ENCODE measurements at regions of chr16 and their contacts with region 1.

Region 1: DNA sequence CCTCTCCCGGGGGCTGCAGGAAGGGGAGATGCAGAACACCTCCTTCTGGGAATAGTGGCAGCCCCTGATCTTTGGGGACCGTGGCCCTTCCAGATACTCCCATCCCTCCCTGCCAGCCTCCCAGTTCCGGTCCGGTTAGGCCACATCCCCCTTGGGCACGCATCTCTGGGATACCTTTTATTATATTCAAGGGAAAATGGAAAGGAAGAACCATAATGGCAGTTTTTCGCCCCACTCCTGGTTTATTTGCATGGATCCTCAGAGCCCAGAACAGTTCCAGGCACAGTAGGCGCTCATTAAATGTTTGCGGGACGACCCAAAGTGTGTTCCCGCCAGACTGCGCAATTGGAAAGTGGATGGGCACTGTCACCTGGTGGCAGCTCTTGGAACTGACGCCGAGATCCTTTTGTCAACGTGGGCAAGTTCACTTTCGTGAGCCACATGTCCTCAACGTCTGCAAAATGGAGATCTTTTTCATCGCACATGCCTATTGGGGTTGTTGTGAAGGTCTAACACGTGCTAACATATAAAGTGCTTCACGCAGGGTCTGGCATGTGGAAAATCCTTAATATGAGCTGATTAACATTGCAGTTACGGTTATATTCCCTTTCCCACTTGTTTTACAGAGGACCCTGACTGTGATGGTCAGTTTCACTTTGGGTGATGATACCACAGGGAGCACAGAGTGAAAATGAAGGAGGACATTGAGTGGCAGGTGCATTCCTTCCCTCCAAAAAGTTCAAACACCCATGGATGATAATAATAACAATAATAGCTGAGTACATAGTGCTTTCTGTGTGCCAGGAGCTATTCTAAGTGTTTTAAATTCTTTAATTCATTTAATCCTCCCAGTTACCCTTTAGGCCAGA is 1.7 kb upstream of the GPRC5B start:
- DNase-seq: peak; percentile 91
- H3K4me3 Mint-ChIP-seq: peak overlapping the region; percentile 72
- H3K27ac Mint-ChIP-seq: no peak overlapping the region
- H3K4me1 Mint-ChIP-seq: peaks cover 24% of the 10 kb centered on the region
- H3K27me3 Mint-ChIP-seq: peaks cover 21% of the 10 kb centered on the region

Region 2: GRCh38 chr16:19086322-19087199 is 799.7 kb before region 1 on chr16:
- CTCF ChIA-PET with region 1: no interaction called
- intact Hi-C with region 1: loop called (anchors 5 kb)
- DNase-seq: peak; percentile 78
- H3K4me3 Mint-ChIP-seq: peak overlapping the region; percentile 56
- H3K27ac Mint-ChIP-seq: no peak overlapping the region
- H3K4me1 Mint-ChIP-seq: no peaks in the 10 kb centered on the region
- H3K27me3 Mint-ChIP-seq: peaks cover 8% of the 10 kb centered on the region

Region 3: DNA sequence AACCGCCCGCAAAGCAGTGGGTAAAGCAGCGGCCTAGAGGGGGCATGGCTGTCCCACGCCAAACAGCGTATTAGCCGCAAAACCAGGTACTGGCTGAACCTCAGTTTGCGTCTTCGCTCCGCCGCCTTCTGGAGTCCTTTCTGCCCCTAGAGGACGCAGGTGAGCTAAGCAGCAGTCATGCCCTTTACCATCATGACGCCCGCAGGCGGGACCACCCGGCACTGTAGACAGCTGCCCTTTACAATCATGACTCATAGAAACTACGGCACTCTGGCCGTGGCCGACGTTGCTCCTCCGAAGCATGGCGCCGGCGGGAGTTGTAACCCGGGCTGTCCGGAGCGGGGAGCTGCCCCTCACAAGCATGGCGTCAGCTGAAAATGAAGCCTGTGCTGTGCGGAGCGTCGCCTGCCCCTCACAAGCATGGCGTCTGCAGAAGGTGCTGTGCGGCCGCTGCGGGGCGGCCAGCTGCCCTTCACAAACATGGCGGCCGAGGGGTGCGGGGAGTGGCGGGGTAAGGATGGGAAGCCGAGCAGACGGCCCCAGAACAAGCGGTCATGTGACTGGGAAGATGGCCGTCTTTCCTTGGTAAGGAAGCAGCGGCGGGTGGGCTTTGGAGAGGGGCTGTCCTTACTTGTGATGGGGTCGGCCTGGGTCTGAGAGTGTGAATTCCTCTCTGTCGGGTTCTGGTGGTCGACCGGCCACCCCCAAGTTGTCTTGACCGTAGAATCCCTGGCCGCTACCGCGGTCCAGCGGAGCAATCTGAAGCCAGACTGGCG is 331.0 kb before region 1 on chr16 and contains the start of gene VPS35L:
- CTCF ChIA-PET with region 1: interaction called, 28 read pairs
- intact Hi-C with region 1: loop called (anchors 1 kb)
- DNase-seq: peak; percentile 93
- H3K4me3 Mint-ChIP-seq: peak within 1 kb of the TSS; percentile 91
- H3K27ac Mint-ChIP-seq: peak within 1 kb of the TSS; percentile 89
- H3K4me1 Mint-ChIP-seq: peaks cover 17% of the 10 kb centered on the region
- H3K27me3 Mint-ChIP-seq: no peaks in the 10 kb centered on the region
- total RNA-seq, gene VPS35L: 30.3 to 32.4 TPM

Region 4: DNA sequence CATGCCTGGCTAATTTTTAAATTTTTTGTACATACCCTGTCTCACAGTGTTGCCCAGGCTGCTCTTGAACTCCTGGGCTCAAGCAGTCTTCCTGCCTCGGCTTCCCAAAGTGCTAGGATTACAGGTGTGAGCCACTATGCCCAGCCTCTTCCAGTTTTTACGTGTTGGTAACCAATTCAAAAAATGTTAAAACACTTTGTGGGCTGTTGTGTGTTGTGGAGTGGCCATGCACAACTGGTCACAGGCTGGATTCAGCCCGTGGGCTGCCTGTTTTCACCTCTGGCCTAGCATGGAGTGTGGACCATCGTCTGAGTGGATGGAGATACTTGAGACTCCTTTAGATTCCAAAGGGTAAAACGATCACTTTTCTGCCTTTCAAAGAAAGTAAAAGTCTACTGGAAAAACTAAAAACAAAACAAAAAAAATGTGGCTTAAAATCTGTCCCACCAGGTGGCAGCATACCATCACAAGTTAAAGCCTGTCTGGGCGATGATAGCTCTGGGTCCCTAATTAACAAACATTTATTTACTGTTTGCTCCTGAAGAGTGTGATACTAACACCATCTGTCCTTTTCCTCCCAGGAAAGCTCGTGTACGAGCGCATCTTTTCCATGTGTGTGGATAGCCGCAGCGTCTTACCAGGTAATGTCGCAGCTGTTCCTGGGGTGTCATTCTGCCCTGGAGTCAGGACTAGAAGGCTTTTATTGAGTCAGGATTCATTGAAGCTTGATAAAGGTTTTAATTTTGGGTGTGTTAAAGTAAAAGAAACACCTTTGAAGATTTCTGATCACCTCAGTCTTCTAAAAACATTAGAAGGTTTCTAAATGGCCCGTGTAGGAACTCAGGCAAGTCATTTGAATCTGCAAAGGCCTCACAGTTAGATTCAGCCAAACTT is 285.0 kb before region 1 on chr16:
- CTCF ChIA-PET with region 1: interaction called, 54 read pairs
- intact Hi-C with region 1: loop called (anchors 1 kb)
- DNase-seq: peak; percentile 55
- H3K4me3 Mint-ChIP-seq: no peak overlapping the region
- H3K27ac Mint-ChIP-seq: no peak overlapping the region
- H3K4me1 Mint-ChIP-seq: no peaks in the 10 kb centered on the region
- H3K27me3 Mint-ChIP-seq: no peaks in the 10 kb centered on the region

Region 5: DNA sequence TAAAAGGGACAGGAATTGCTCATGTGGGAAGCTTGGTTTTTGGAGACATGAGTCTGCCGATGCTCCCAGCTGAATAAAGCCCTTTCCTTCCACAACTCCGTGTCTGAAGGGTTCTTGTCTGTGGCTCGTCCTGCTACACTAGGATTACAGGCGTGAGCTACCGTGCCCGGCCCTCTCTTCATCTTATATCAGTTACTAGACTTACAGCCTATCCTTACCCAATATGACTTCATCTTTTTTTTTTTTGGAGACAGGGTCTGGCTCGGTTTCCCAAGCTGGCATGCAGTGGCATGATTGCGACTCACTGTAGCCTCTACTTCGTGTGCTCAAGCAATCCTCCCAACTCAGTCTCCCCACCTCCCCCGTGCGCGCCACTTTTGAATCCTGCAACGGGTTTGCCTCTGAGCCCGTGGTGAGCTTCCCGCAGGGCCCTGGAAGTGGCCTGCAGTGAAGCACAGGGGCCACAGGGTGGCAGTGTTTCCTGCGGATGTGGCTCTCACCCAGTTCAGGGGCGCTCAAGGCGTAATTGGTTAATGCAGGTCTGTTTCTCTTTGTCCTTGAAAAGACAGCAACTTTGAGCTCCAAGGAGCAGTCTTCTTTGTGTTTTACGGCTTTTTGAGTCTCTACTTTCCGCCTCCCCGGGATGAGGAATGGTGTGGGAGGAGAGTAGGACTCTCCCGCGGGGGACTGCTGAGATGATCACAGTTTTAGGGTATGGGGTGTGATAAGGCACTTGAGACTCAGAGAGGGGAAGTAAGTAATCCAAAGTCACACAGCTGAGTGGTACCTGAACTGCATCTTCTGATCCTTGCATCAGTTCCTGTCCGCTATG is 21.1 kb after region 1 on chr16:
- CTCF ChIA-PET with region 1: interaction called, 10 read pairs
- intact Hi-C with region 1: no loop called
- DNase-seq: peak; percentile 79
- H3K4me3 Mint-ChIP-seq: no peak overlapping the region
- H3K27ac Mint-ChIP-seq: no peak overlapping the region
- H3K4me1 Mint-ChIP-seq: peaks cover 8% of the 10 kb centered on the region
- H3K27me3 Mint-ChIP-seq: peaks cover 14% of the 10 kb centered on the region

Measured in activated naive CD4-positive, alpha-beta T cell treated with anti-CD3 and anti-CD28 coated beads for 36 hours (primary cell).